ENCODE measurements at regions of chr6 and their contacts with region 1.

Region 1: DNA sequence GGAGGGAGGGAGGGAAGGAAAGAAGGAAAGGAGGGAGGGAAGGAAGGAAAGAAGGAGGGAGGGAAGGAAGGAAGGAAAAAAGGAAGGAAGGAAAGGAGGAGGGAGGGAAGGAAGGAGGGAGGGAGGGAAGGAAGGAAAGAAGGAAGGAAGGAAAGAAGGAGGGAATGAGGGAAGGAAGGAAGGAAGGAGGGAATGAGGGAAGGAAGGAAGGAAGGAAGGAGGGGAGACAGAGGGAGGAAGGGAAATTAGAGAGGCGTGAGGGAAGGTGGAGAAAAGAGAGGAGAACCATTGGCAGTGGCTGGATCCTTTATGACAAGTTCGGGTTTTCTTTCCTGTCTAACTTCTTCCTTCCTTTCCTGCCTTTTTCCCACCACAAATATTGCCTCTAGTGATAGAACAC is 22.3 kb upstream of the SUPT3H start:
- DNase-seq: no peak
- H3K4me3 ChIP-seq: no peak overlapping the region
- H3K27ac ChIP-seq: no peak overlapping the region
- H3K4me1 ChIP-seq: no peaks in the 10 kb centered on the region
- H3K27me3 ChIP-seq: peaks cover 0 to 28% (median 0%) of the 10 kb centered on the region in 4 donors
- CTCF ChIP-seq: no peak
- POLR2A ChIP-seq: no peak

Region 2: GRCh38 chr6:45196121-45196520 is 203.9 kb before region 1 on chr6:
- intact Hi-C with region 1: no loop called
- DNase-seq: no peak
- H3K4me3 ChIP-seq: no peak overlapping the region
- H3K27ac ChIP-seq: no peak overlapping the region
- H3K4me1 ChIP-seq: no peaks in the 10 kb centered on the region
- H3K27me3 ChIP-seq: no peaks in the 10 kb centered on the region
- CTCF ChIP-seq: no peak
- POLR2A ChIP-seq: no peak

Region 3: DNA sequence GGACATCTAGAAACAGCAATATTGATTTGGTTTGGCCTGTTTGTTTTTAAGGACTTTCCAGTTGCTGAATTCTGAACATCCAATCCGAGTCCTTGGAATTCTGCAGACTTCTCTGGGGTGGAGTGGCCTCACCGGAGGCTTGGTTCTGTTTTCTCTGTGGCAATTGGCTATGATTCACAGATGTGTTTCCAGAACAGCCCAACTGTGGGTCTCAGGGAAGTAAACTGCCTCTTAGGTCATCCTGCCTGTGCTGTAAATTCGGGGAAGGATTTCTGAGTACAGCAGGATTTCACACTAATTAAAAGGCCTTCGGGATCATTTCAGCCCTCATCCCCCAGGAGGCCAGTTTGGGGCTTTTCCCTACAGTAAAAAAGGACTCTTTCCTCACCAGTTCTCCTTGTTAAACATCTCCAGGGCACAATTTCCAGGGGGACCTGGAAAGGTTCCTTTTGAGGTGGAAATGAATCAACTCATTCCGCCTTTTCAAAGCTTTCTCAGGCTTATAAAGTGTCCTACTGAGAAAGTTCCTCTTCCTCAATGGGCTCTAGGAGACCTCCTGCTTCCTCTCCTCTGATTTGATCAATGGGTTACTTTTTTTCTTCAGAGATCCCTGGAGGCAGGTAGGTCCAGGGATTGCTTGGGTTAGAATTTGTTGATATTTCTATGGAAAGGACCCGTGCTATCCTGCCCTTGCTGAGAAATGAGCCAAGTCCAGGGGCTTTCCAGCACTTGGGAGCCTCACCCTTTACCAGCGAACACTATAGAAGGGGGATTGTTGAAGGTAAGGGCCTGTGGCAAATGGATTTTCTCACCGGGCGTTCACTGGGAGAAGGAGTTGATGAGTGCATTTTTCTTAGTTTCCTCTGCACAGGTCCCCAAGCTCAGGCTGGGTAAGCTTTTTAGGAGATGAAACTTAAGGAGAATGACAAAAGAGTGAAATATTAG is 501.1 kb after region 1 on chr6:
- intact Hi-C with region 1: loop called (anchors 10 kb)
- DNase-seq: no peak
- H3K4me3 ChIP-seq: no peak overlapping the region
- H3K27ac ChIP-seq: peak overlapping the region in 2 of 4 donors; percentile 12 to 36
- H3K4me1 ChIP-seq: no peaks in the 10 kb centered on the region
- H3K27me3 ChIP-seq: no peaks in the 10 kb centered on the region
- CTCF ChIP-seq: no peak
- POLR2A ChIP-seq: no peak

Measured in esophagus squamous epithelium (tissue), 5 donors.